ENCODE measurements at regions of chr12 and their contacts with region 1.

Region 1: GRCh38 chr12:67648521-67649260 is at the start of gene DYRK2:
- DNase-seq: peak; percentile 79 to 85
- ATAC-seq: peak; percentile 60 to 79 (median 70)
- H3K4me3 ChIP-seq: peak within 1 kb of the TSS; percentile 51 to 99 (median 91)
- H3K27ac ChIP-seq: peak within 1 kb of the TSS; percentile 95 to 99 (median 98)
- H3K4me1 ChIP-seq: peaks cover 0 to 45% (median 39%) of the 10 kb centered on the region in 9 donors
- H3K27me3 ChIP-seq: no peaks in the 10 kb centered on the region
- CTCF ChIP-seq: peak in 6 of 9 donors; percentile 8 to 47 (median 21)
- total RNA-seq, gene DYRK2: 30.0 to 55.8 (median 44.2) TPM

Region 2: GRCh38 chr12:67268896-67269631 is 379.6 kb before region 1 on chr12 and contains the start of gene CAND1:
- intact Hi-C with region 1: loop called in 1 of 10 experiments (anchors 5 kb)
- DNase-seq: peak; percentile 97 to 99
- ATAC-seq: peak; percentile 93 to 97 (median 95)
- H3K4me3 ChIP-seq: peak within 1 kb of the TSS; percentile 74 to 97 (median 90)
- H3K27ac ChIP-seq: peak within 1 kb of the TSS; percentile 91 to 99 (median 96)
- H3K4me1 ChIP-seq: peaks cover 0 to 47% (median 39%) of the 10 kb centered on the region in 9 donors
- H3K27me3 ChIP-seq: no peaks in the 10 kb centered on the region
- CTCF ChIP-seq: peak in 4 of 9 donors; percentile 7 to 45 (median 40)
- total RNA-seq, gene CAND1: 32.6 to 57.2 (median 36.3) TPM

Region 3: GRCh38 chr12:67433385-67434175 is 215.1 kb before region 1 on chr12:
- intact Hi-C with region 1: loop called in 1 of 10 experiments (anchors 5 kb)
- DNase-seq: no peak
- ATAC-seq: no peak
- H3K4me3 ChIP-seq: no peak overlapping the region
- H3K27ac ChIP-seq: peak overlapping the region in 7 of 10 donors; percentile 13 to 85 (median 62)
- H3K4me1 ChIP-seq: peaks cover 0 to 41% (median 24%) of the 10 kb centered on the region in 9 donors
- H3K27me3 ChIP-seq: no peaks in the 10 kb centered on the region
- CTCF ChIP-seq: no peak

Region 4: GRCh38 chr12:67457778-67458177 is 190.9 kb before region 1 on chr12:
- intact Hi-C with region 1: loop called in 1 of 10 experiments (anchors 5 kb)
- DNase-seq: no peak
- ATAC-seq: peak; percentile 24 to 66 (median 61)
- H3K4me3 ChIP-seq: no peak overlapping the region
- H3K27ac ChIP-seq: peak overlapping the region; percentile 27 to 80 (median 52)
- H3K4me1 ChIP-seq: peaks cover 3 to 36% (median 27%) of the 10 kb centered on the region in 9 donors
- H3K27me3 ChIP-seq: no peaks in the 10 kb centered on the region
- CTCF ChIP-seq: peak in 6 of 9 donors; percentile 34 to 49 (median 44)

Region 5: GRCh38 chr12:67625004-67625403 is 23.7 kb before region 1 on chr12:
- intact Hi-C with region 1: no loop called
- DNase-seq: no peak
- ATAC-seq: no peak
- H3K4me3 ChIP-seq: no peak overlapping the region
- H3K27ac ChIP-seq: no peak overlapping the region
- H3K4me1 ChIP-seq: peaks cover 0 to 5% (median 0%) of the 10 kb centered on the region in 9 donors
- H3K27me3 ChIP-seq: no peaks in the 10 kb centered on the region
- CTCF ChIP-seq: no peak

Region 6: DNA sequence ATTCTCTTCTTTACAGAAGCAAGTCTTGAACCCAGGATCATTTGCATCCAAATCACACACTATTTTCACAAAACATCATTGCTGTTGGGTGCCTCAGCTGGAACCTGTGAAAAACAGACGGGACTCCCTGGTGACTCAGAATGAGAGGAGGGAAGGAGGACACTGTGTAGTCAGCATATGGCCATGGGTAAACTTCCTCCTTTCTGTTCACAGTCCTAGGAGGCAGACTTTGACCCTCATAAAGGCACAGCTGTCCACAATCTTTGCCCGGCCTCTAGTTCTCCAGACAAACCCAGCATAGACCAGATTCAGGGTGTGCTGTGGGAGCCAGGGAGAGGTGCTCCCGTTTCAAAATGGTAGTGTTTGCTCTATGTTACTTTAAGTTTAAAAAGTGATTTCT is 61.9 kb after region 1 on chr12:
- intact Hi-C with region 1: loop called in 2 of 10 experiments (anchors 10 kb)
- DNase-seq: peak in 1 of 2 donors; percentile 16
- ATAC-seq: peak in 5 of 8 donors; percentile 19 to 79 (median 48)
- H3K4me3 ChIP-seq: no peak overlapping the region
- H3K27ac ChIP-seq: peak overlapping the region in 6 of 10 donors; percentile 31 to 79 (median 68)
- H3K4me1 ChIP-seq: peaks cover 1 to 23% (median 10%) of the 10 kb centered on the region in 9 donors
- H3K27me3 ChIP-seq: no peaks in the 10 kb centered on the region
- CTCF ChIP-seq: no peak

Region 7: GRCh38 chr12:67788118-67788517 is 139.4 kb after region 1 on chr12:
- intact Hi-C with region 1: loop called in 2 of 10 experiments (anchors 10 kb)
- DNase-seq: no peak
- ATAC-seq: peak in 6 of 8 donors; percentile 43 to 81 (median 70)
- H3K4me3 ChIP-seq: no peak overlapping the region
- H3K27ac ChIP-seq: peak overlapping the region in 4 of 10 donors; percentile 1 to 48 (median 28)
- H3K4me1 ChIP-seq: peaks cover 0 to 45% (median 9%) of the 10 kb centered on the region in 9 donors
- H3K27me3 ChIP-seq: no peaks in the 10 kb centered on the region
- CTCF ChIP-seq: no peak

Region 8: DNA sequence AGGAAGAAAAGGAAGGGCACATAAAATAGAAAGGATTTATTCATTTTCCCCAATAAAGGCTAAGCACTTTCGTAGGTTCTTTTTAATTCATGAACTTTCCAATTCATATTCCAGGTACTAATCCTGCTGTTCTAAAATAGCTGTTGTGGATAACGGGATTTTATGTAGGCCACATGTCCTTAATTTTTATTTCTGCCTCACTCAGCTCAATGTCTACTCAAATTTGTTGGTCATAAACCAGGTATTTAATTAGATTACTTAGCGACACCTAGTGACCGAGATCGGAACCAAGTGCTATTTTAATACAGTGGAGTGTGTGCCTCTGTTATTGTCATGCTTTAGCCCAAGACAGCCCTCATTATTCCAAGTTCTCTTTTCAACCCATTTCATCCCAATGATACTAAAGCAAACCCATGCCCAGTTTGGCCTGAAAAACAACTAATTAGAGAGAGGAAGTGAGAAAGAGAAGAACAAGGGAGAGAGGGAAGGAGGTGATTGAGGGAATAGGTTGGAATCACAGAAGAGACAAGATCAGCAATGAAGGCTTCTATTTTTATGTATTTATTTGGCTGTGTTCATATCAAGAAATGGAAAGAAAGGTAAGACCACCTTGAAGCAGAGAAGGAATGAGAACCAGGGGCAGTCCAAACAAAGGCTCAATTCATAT is 294.7 kb after region 1 on chr12:
- intact Hi-C with region 1: loop called in 8 of 10 experiments (anchors 1 to 10 kb)
- DNase-seq: peak in 1 of 2 donors; percentile 79
- ATAC-seq: peak; percentile 79 to 92 (median 88)
- H3K4me3 ChIP-seq: no peak overlapping the region
- H3K27ac ChIP-seq: peak overlapping the region in 6 of 10 donors; percentile 15 to 53 (median 45)
- H3K4me1 ChIP-seq: peaks cover 0 to 26% (median 8%) of the 10 kb centered on the region in 9 donors
- H3K27me3 ChIP-seq: no peaks in the 10 kb centered on the region
- CTCF ChIP-seq: peak; percentile 45 to 83 (median 76)

Measured in heart right ventricle (tissue), 16 donors.